Naive thymus-derived CD4-positive, alpha-beta T cell (primary cell): ENCODE measurements at regions of chr11 and their contacts with region 1.

Region 1: DNA sequence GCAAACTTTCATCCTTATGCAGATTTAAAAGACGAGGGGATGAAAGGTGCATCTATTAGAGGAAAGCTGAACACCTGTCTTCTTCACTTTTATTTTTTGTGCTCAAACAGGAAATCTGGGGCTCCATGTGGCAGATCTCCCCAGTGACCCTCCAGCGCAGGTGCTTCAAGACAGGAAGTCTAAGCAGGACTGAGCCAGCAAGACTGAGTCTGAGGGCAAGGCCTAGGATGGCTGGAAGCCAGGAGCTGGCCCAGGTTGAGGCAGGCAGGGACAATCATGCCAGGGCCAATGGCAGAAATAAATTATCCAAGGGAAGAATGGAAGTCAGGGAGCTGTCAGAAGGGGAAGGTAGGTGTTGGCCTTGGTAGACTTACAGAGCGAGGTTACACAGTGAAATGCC is 101.1 kb upstream of the SPON1 start:
- DNase-seq: peak in 4 of 9 donors; percentile 11 to 19 (median 14)
- ATAC-seq: no peak
- H3K4me3 ChIP-seq: no peak overlapping the region
- H3K4me3 Mint-ChIP-seq: peak overlapping the region in 7 of 10 donors; percentile 6 to 66 (median 55)
- H3K27ac ChIP-seq: no peak overlapping the region
- H3K27ac Mint-ChIP-seq: peak overlapping the region in 8 of 9 donors; percentile 33 to 98 (median 71)
- H3K4me1 ChIP-seq: peaks cover 6 to 19% of the 10 kb centered on the region in 2 donors
- H3K4me1 Mint-ChIP-seq: peaks cover 20 to 33% (median 25%) of the 10 kb centered on the region in 7 donors
- H3K27me3 ChIP-seq: no peaks in the 10 kb centered on the region
- H3K27me3 Mint-ChIP-seq: no peaks in the 10 kb centered on the region

Region 2: DNA sequence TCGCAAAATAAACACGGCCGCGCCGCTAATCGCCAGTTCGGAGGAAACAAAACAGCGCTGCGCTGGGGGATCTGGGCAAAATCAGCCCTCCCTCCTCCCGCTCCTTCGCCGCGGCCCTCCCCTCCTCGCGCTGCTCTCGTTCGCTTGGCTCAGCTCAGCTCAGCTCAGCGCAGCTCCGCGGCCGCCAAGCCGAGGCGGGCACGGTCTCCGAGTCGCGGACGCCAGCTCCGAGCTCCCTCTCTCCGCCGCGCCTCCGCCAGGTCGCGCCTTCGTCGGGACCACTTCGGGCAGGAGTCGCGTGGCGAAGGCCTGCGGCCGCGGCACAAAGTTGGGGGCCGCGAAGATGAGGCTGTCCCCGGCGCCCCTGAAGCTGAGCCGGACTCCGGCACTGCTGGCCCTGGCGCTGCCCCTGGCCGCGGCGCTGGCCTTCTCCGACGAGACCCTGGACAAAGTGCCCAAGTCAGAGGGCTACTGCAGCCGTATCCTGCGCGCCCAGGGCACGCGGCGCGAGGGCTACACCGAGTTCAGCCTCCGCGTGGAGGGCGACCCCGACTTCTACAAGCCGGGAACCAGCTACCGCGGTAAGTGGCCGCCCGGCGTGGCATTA is 101.3 kb after region 1 on chr11 and contains the start of gene SPON1:
- CTCF ChIA-PET with region 1: interaction called, 29 read pairs
- POLR2A ChIA-PET with region 1: interaction called, 4 read pairs
- intact Hi-C with region 1: loop called in 1 of 2 experiments (anchors 1 kb)
- DNase-seq: peak in 7 of 9 donors; percentile 34 to 57 (median 42)
- ATAC-seq: peak; percentile 81
- H3K4me3 ChIP-seq: peak within 1 kb of the TSS; percentile 34
- H3K4me3 Mint-ChIP-seq: peak within 1 kb of the TSS; percentile 68 to 86 (median 77)
- H3K27ac ChIP-seq: no peak within 1 kb of the TSS
- H3K27ac Mint-ChIP-seq: peak within 1 kb of the TSS in 1 of 9 donors; percentile 55
- H3K4me1 ChIP-seq: peaks cover 10 to 16% of the 10 kb centered on the region in 2 donors
- H3K4me1 Mint-ChIP-seq: peaks cover 4 to 18% (median 13%) of the 10 kb centered on the region in 7 donors
- H3K27me3 ChIP-seq: peaks cover 6 to 21% of the 10 kb centered on the region in 2 donors
- H3K27me3 Mint-ChIP-seq: peaks cover 55 to 88% (median 62%) of the 10 kb centered on the region in 5 donors
- total RNA-seq, gene SPON1: 1.6 to 20.8 (median 3.9) TPM